ENCODE measurements at regions of chr20 and their contacts with region 1.

Region 1: GRCh38 chr20:43448748-43449535 is 8.8 kb upstream of the SRSF6 start:
- DNase-seq: peak; percentile 33
- ATAC-seq: peak; percentile 87
- H3K4me3 ChIP-seq: no peak overlapping the region
- H3K27ac ChIP-seq: no peak overlapping the region
- H3K4me1 ChIP-seq: no peaks in the 10 kb centered on the region
- H3K27me3 ChIP-seq: peaks cover 7% of the 10 kb centered on the region
- CTCF ChIP-seq: peak; percentile 68
- POLR2A ChIP-seq: no peak
- RAD21 ChIP-seq: peak; percentile 80

Region 2: GRCh38 chr20:43691928-43692524 is 243.1 kb after region 1 on chr20:
- CTCF ChIA-PET with region 1: no interaction called
- POLR2A ChIA-PET with region 1: no interaction called
- dilution Hi-C with region 1: no loop called
- in situ Hi-C with region 1: no loop called
- intact Hi-C with region 1: loop called (anchors 1 kb)
- DNase-seq: peak; percentile 18
- ATAC-seq: peak; percentile 49
- H3K4me3 ChIP-seq: no peak overlapping the region
- H3K27ac ChIP-seq: no peak overlapping the region
- H3K4me1 ChIP-seq: no peaks in the 10 kb centered on the region
- H3K27me3 ChIP-seq: no peaks in the 10 kb centered on the region
- CTCF ChIP-seq: peak; percentile 52
- POLR2A ChIP-seq: no peak
- RAD21 ChIP-seq: peak; percentile 60

Region 3: GRCh38 chr20:44092551-44093248 is 643.8 kb after region 1 on chr20:
- CTCF ChIA-PET with region 1: interaction called, 4 read pairs
- POLR2A ChIA-PET with region 1: no interaction called
- dilution Hi-C with region 1: no loop called
- in situ Hi-C with region 1: loop called (anchors 10 kb)
- intact Hi-C with region 1: loop called (anchors 5 kb)
- DNase-seq: peak; percentile 49
- ATAC-seq: peak; percentile 62
- H3K4me3 ChIP-seq: no peak overlapping the region
- H3K27ac ChIP-seq: no peak overlapping the region
- H3K4me1 ChIP-seq: peaks cover 3% of the 10 kb centered on the region
- H3K27me3 ChIP-seq: peaks cover 2% of the 10 kb centered on the region; the same call in 1 of the 2 replicates
- CTCF ChIP-seq: peak; percentile 56
- POLR2A ChIP-seq: no peak
- RAD21 ChIP-seq: peak; percentile 61